Activated naive CD4-positive, alpha-beta T cell treated with anti-CD3 and anti-CD28 coated beads for 36 hours (primary cell): ENCODE measurements at regions of chr2 and their contacts with region 1.

Region 1: GRCh38 chr2:73176881-73177644 is 25.3 kb upstream of the NOTO start:
- DNase-seq: peak; percentile 92
- H3K4me3 Mint-ChIP-seq: peak overlapping the region; percentile 78
- H3K27ac Mint-ChIP-seq: peak overlapping the region; percentile 65
- H3K4me1 Mint-ChIP-seq: peaks cover 24% of the 10 kb centered on the region
- H3K27me3 Mint-ChIP-seq: peaks cover 26% of the 10 kb centered on the region

Region 2: DNA sequence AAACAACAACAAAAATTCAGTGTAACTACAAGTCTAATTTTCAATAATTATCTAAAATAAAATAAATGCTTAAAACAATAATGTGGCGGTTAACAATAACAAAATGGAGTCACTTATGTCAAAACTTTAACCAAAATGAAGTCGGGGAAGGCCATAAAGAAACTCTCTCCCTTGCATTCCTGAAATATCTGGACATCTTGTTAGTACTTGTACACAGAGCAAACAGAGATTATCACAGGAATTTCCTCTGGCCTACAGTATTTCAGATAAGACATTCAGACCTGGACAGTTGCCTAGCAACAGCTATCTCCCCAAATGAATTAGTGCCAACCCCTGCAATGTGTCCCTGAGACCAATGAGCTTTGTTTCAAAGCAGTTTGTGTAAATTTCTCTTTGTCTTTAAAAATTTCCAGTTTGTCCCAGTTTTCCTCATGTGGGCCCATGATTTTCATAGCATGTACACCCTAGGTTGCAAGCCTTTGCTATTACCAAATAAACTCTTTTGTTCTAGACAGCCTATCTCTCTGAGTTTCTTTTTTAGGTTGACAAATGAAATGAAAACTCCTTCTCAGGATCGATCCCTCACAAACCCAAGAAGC is 419.8 kb before region 1 on chr2:
- CTCF ChIA-PET with region 1: no interaction called
- intact Hi-C with region 1: no loop called
- DNase-seq: no peak
- H3K4me3 Mint-ChIP-seq: no peak overlapping the region
- H3K27ac Mint-ChIP-seq: no peak overlapping the region
- H3K4me1 Mint-ChIP-seq: no peaks in the 10 kb centered on the region
- H3K27me3 Mint-ChIP-seq: no peaks in the 10 kb centered on the region

Region 3: DNA sequence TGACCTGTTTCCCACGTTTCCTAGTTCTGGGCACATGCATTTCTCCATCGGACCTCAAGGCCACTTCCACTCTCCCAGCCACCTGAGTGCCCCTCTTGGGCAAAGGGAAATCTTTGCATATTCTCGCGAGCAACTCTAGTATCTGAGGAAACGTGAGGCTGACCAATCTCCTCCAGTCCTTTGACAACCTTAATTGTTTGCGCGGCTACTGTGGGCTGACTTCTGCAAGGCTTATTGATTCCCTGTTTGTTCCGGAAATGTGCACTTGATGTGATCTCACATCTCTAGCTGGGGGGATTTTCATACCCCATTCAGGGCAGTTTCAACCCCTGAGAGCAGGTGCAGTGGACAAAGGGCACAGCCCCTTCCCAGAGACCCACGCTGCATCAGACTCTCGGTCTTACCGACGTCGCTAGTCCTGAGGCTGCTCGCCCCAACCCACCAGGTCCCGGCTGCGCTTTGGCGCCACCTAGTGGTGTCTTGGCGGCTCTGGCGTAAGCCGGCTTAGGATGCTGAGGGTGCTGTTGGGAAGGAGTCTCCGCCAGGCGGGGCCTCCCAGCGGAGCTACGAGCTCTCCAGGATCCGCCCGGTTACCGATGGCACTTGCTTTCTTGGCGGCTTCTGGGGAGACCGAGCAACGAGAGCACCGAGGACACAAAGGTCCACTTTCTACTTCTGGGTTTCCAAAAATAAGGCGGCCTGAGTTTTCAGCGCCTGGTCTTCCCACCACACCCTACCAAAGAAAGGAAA is 314.6 kb before region 1 on chr2:
- CTCF ChIA-PET with region 1: interaction called, 5 read pairs
- intact Hi-C with region 1: loop called (anchors 1 kb)
- DNase-seq: peak; percentile 91
- H3K4me3 Mint-ChIP-seq: peak overlapping the region; percentile 31
- H3K27ac Mint-ChIP-seq: no peak overlapping the region
- H3K4me1 Mint-ChIP-seq: peaks cover 10% of the 10 kb centered on the region
- H3K27me3 Mint-ChIP-seq: peaks cover 49% of the 10 kb centered on the region

Region 4: GRCh38 chr2:72973566-72974435 is 203.3 kb before region 1 on chr2:
- CTCF ChIA-PET with region 1: interaction called, 15 read pairs
- intact Hi-C with region 1: no loop called
- DNase-seq: peak; percentile 53
- H3K4me3 Mint-ChIP-seq: no peak overlapping the region
- H3K27ac Mint-ChIP-seq: no peak overlapping the region
- H3K4me1 Mint-ChIP-seq: no peaks in the 10 kb centered on the region
- H3K27me3 Mint-ChIP-seq: no peaks in the 10 kb centered on the region

Region 5: GRCh38 chr2:73085691-73086360 is 91.2 kb before region 1 on chr2:
- CTCF ChIA-PET with region 1: interaction called, 45 read pairs
- intact Hi-C with region 1: loop called (anchors 1 kb)
- DNase-seq: peak; percentile 90
- H3K4me3 Mint-ChIP-seq: no peak overlapping the region
- H3K27ac Mint-ChIP-seq: no peak overlapping the region
- H3K4me1 Mint-ChIP-seq: no peaks in the 10 kb centered on the region
- H3K27me3 Mint-ChIP-seq: no peaks in the 10 kb centered on the region

Region 6: DNA sequence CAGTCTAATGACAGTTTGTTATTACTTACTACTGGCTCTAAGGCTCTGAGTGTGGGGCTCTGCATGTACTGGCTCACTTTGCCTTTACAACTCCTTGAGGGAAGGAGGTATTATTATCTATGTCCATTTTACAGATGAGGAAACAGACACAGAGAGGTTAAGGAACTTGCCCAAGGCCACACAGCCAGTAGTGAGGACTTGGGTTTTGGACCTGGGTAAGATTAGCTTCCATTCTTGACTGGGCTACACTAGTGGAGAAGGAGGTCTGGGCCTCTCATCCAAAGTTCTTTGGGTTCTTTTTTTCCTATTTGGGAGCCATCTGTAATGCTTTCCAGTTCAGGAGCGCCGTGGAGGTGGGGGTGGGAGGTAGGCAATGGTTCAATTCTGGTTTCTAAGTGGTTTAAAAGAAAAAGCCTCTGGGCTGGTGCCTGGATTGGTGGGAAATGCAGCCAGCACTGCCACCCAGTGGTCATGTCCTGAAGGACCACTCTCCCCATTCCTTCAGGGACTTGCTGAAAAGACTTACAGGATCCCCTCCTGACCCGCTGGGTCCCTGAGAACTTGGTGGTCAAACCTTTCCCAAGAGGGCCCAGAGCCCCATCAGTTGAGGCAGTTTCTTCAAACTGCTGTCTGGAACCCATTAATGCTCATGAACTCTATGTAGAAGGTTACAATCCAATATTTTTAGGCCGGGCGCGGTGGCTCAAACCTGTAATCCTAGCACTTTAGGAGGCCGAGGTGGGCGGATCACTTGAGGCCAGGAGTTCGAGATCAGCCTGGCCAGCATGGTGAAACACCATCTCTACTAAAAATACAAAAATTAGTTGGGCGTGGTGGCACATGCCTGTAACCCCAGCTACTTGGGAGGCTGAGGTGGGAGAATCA is 13.3 kb before region 1 on chr2:
- CTCF ChIA-PET with region 1: interaction called, 17 read pairs
- intact Hi-C with region 1: no loop called
- DNase-seq: peak; percentile 82
- H3K4me3 Mint-ChIP-seq: no peak overlapping the region
- H3K27ac Mint-ChIP-seq: no peak overlapping the region
- H3K4me1 Mint-ChIP-seq: no peaks in the 10 kb centered on the region
- H3K27me3 Mint-ChIP-seq: peaks cover 2% of the 10 kb centered on the region

Region 7: GRCh38 chr2:73233154-73233931 is 56.3 kb after region 1 on chr2 and contains the start of gene PRADC1:
- CTCF ChIA-PET with region 1: interaction called, 8 read pairs
- intact Hi-C with region 1: loop called (anchors 1 kb)
- DNase-seq: peak; percentile 97
- H3K4me3 Mint-ChIP-seq: peak within 1 kb of the TSS; percentile 88
- H3K27ac Mint-ChIP-seq: peak within 1 kb of the TSS; percentile 77
- H3K4me1 Mint-ChIP-seq: peaks cover 31% of the 10 kb centered on the region
- H3K27me3 Mint-ChIP-seq: no peaks in the 10 kb centered on the region
- total RNA-seq, gene PRADC1: 10.1 to 10.2 TPM

Region 8: DNA sequence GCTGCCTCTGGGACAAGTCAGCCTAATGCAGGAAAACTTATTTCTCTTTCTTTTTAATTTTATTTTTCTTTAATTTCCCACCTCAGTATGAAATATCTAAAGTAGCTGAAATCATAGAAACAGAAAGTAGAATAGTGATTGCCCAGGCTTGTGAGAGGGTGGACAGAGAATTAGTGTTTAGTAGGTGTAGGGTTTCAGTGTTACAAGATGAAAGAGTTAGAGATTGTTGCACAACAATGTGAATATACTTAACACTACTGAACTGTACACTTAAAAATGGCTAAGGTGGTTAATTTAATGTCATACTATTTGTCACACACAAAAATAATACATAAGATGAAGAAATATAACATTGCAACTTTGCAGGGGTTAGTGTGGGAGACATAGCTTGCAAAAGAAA is 384.4 kb after region 1 on chr2:
- CTCF ChIA-PET with region 1: no interaction called
- intact Hi-C with region 1: no loop called
- DNase-seq: no peak
- H3K4me3 Mint-ChIP-seq: no peak overlapping the region
- H3K27ac Mint-ChIP-seq: no peak overlapping the region
- H3K4me1 Mint-ChIP-seq: no peaks in the 10 kb centered on the region
- H3K27me3 Mint-ChIP-seq: no peaks in the 10 kb centered on the region